ENCODE measurements at regions of chr2 and their contacts with region 1.

Region 1: DNA sequence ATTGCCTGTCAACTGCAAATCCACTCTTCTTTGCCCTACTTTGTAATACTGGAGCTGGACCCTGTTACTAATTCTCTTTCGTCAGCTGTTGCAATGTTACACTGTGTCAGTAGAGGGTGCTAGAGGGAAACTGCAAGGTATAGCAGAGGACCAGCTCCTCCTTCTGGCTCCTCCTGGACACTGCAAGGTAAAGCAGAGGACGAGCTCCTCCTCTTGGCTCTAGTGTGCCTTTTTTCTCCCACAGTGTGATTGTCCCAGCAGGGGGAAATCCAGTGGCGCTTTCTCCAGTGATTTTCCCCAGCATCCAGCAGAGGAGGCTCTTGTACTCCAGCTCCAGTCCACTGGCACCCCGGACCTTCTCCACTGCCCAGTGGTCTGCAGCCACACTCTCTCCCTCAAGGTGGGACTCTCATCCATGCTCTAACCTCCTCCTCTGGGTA is 95.6 kb downstream of the CAPN13 start:
- DNase-seq: peak; percentile 89

Region 2: GRCh38 chr2:30208452-30208851 is 503.2 kb before region 1 on chr2:
- intact Hi-C with region 1: loop called (anchors 1 kb)
- DNase-seq: no peak

Region 3: GRCh38 chr2:30336978-30337841 is 374.5 kb before region 1 on chr2:
- intact Hi-C with region 1: loop called (anchors 5 kb)
- DNase-seq: no peak

Region 4: DNA sequence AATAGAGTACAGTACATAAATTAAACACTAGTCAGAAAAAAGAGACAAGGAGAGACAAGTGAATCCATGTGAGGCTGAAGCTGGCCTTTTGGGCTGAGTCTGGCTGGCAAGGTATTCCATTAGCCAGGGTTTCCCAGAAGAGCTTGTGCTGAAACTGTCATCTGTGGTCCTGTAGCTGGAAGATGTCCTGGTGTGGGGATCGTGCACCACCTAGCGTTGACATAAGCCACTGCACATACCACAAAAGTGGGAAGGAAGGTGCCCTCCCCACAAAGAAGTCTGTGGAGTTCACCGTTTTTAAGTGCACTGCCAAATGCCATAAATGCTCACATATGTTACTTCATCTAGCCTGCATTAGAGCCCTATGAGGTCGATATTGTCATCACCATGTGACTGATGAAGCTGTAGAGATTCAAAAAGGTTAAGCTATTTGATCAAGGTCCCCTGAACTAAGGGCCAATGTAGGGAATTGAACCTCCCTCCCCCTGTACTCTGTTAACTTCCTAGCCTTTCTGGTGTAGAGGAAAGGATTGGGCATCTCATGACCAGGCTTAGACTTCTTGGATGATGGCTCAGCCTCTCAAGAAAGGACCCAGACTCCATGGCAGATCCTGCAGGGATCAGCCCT is 458.5 kb after region 1 on chr2:
- intact Hi-C with region 1: loop called (anchors 1 kb)
- DNase-seq: peak; percentile 82

Region 5: GRCh38 chr2:31523871-31524492 is 812.3 kb after region 1 on chr2:
- intact Hi-C with region 1: loop called (anchors 5 kb)
- DNase-seq: no peak

Measured in cardiac septum (tissue), 1 donor.